ENCODE measurements at regions of chr3 and their contacts with region 1.

Region 1: GRCh38 chr3:43503067-43503728 is 118.6 kb downstream of the ANO10 start:
- DNase-seq: no peak
- H3K4me3 ChIP-seq: no peak overlapping the region
- H3K27ac ChIP-seq: no peak overlapping the region
- H3K4me1 ChIP-seq: peaks cover 3% of the 10 kb centered on the region
- H3K27me3 ChIP-seq: no peaks in the 10 kb centered on the region
- CTCF ChIP-seq: peak; percentile 45 to 48

Region 2: GRCh38 chr3:43268636-43269035 is 234.6 kb before region 1 on chr3:
- CTCF ChIA-PET with region 1: no interaction called
- dilution Hi-C with region 1: no loop called
- in situ Hi-C with region 1: no loop called
- intact Hi-C with region 1: no loop called
- DNase-seq: peak; percentile 71
- H3K4me3 ChIP-seq: no peak overlapping the region
- H3K27ac ChIP-seq: no peak overlapping the region
- H3K4me1 ChIP-seq: peaks cover 4% of the 10 kb centered on the region
- H3K27me3 ChIP-seq: no peaks in the 10 kb centered on the region
- CTCF ChIP-seq: no peak

Region 3: GRCh38 chr3:43378066-43378935 is 124.9 kb before region 1 on chr3:
- CTCF ChIA-PET with region 1: no interaction called
- dilution Hi-C with region 1: no loop called
- in situ Hi-C with region 1: no loop called
- intact Hi-C with region 1: loop called (anchors 5 kb)
- DNase-seq: peak; percentile 43
- H3K4me3 ChIP-seq: no peak overlapping the region
- H3K27ac ChIP-seq: no peak overlapping the region
- H3K4me1 ChIP-seq: no peaks in the 10 kb centered on the region
- H3K27me3 ChIP-seq: no peaks in the 10 kb centered on the region
- CTCF ChIP-seq: peak; percentile 86 to 87